ENCODE measurements at regions of chr12 and their contacts with region 1.

Region 1: GRCh38 chr12:114447274-114447716 is 41.4 kb upstream of the TBX5 start:
- DNase-seq: peak in 2 of 5 donors; percentile 32 to 55
- ATAC-seq: peak in 3 of 4 donors; percentile 37 to 67 (median 58)
- H3K4me3 ChIP-seq: peak overlapping the region in 9 of 12 donors; percentile 9 to 38 (median 20)
- H3K27ac ChIP-seq: peak overlapping the region in 4 of 12 donors; percentile 42 to 81 (median 54)
- H3K4me1 ChIP-seq: peaks cover 0 to 29% (median 2%) of the 10 kb centered on the region in 12 donors
- H3K27me3 ChIP-seq: peaks cover 13 to 83% (median 50%) of the 10 kb centered on the region in 9 donors
- CTCF ChIP-seq: no peak
- POLR2A ChIP-seq: no peak

Region 2: GRCh38 chr12:114253976-114254778 is 193.1 kb before region 1 on chr12:
- intact Hi-C with region 1: loop called in 1 of 10 experiments (anchors 10 kb)
- DNase-seq: no peak
- ATAC-seq: no peak
- H3K4me3 ChIP-seq: no peak overlapping the region
- H3K27ac ChIP-seq: no peak overlapping the region
- H3K4me1 ChIP-seq: no peaks in the 10 kb centered on the region
- H3K27me3 ChIP-seq: peaks cover 0 to 5% (median 0%) of the 10 kb centered on the region in 9 donors
- CTCF ChIP-seq: no peak
- POLR2A ChIP-seq: no peak

Region 3: GRCh38 chr12:114408886-114409851 is 38.1 kb before region 1 on chr12:
- intact Hi-C with region 1: loop called in 2 of 10 experiments (anchors 5 kb)
- DNase-seq: peak; percentile 39 to 80 (median 65)
- ATAC-seq: peak; percentile 12 to 48 (median 39)
- H3K4me3 ChIP-seq: peak overlapping the region; percentile 15 to 88 (median 65)
- H3K27ac ChIP-seq: peak overlapping the region; percentile 57 to 96 (median 90)
- H3K4me1 ChIP-seq: peaks cover 0 to 29% (median 12%) of the 10 kb centered on the region in 12 donors
- H3K27me3 ChIP-seq: peaks cover 0 to 97% (median 0%) of the 10 kb centered on the region in 9 donors
- CTCF ChIP-seq: peak in 4 of 12 donors; percentile 6 to 15 (median 9)
- POLR2A ChIP-seq: no peak

Region 4: DNA sequence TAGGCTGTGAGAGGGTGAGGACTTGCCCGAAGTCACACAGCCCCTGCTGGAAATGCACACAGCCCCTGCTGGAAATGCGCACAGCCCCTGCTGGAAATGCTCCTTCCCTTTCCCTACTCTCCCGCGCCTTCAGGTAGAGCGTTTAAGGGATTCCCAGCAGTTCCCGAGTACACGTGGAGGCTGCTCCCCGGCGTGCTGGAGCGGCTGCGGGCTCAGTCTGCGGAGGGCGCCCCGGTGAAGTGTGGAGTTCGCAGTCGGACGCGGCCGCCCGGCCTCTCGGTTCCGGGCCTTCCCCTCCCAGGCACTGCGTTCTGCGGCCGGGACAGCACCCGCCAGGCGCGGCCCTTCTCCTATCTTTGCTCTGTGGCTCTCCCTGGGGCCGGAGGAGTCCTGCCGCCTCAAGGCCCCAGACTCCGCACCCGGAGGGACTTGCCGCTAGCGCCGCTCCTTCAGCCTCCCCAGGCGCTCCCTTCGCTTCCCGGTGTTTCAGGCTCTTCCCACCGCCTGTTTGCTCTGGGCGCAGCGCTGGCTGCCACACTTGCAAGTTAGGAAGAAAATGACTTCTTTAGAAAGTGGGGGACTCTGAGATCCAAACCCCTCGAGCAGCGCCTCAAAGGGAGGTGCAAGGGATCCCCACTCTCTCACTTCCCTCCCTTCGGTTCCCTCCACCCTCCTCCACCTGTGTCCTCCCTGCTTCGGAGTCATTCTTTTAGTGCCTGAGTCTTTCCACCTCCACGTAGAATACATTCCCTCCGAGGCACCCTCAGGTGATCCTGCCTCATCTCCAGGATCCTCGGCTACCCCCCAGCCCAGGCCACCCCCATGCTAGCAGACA is 33.0 kb before region 1 on chr12:
- intact Hi-C with region 1: loop called in 2 of 10 experiments (anchors 5 kb)
- DNase-seq: no peak
- ATAC-seq: no peak
- H3K4me3 ChIP-seq: no peak overlapping the region
- H3K27ac ChIP-seq: no peak overlapping the region
- H3K4me1 ChIP-seq: peaks cover 0 to 24% (median 7%) of the 10 kb centered on the region in 12 donors
- H3K27me3 ChIP-seq: peaks cover 0 to 56% (median 0%) of the 10 kb centered on the region in 9 donors
- CTCF ChIP-seq: no peak
- POLR2A ChIP-seq: no peak

Region 5: DNA sequence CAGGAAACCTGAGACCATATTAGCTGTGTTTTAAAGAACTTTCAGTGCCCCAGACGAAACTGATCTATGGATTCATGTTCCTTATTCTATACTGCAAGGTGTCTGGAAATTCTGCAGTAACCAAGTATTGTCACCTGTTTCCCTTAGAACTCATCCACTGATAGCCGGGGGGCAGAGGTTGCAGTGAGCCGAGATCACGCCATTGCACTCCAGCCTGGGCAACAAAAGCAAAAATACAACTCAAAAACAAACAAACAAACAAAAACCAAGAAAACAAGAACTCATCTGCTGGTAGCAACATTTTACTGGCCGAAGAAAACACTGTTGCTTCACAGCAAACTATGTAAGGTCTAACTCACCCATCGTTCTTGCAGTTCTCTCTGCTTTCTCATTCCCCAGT is 72.9 kb after region 1 on chr12:
- intact Hi-C with region 1: no loop called
- DNase-seq: no peak
- ATAC-seq: no peak
- H3K4me3 ChIP-seq: no peak overlapping the region
- H3K27ac ChIP-seq: no peak overlapping the region
- H3K4me1 ChIP-seq: no peaks in the 10 kb centered on the region
- H3K27me3 ChIP-seq: peaks cover 0 to 24% (median 0%) of the 10 kb centered on the region in 9 donors
- CTCF ChIP-seq: no peak
- POLR2A ChIP-seq: no peak